Right lobe of liver (tissue), 6 donors: ENCODE measurements at regions of chr4 and their contacts with region 1.

Region 1: DNA sequence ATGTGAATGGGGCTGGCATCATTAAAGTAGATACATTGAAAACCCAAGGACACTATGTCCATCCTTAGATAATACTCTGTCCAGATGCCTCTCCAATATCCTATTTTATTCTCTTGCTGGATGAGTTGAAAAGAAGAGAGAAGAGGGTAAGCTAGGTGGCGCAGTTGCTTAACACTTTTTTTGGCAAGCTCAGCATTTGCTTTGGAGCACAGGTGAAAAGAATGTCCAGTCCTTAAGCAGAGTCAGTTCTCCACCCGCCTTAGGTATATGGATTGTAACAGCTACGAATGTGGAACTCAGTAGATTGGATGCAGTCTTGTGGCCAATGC is 208.4 kb downstream of the NWD2 start:
- DNase-seq: peak in 1 of 3 donors; percentile 75
- ATAC-seq: peak; percentile 71 to 81 (median 73)
- H3K4me3 ChIP-seq: peak overlapping the region; percentile 50 to 74 (median 56)
- H3K27ac ChIP-seq: peak overlapping the region in 2 of 3 donors; percentile 73 to 90
- H3K4me1 ChIP-seq: peaks cover 0 to 14% (median 3%) of the 10 kb centered on the region in 4 donors
- H3K27me3 ChIP-seq: no peaks in the 10 kb centered on the region
- CTCF ChIP-seq: peak; percentile 57 to 72 (median 63)
- POLR2A ChIP-seq: no peak

Region 2: DNA sequence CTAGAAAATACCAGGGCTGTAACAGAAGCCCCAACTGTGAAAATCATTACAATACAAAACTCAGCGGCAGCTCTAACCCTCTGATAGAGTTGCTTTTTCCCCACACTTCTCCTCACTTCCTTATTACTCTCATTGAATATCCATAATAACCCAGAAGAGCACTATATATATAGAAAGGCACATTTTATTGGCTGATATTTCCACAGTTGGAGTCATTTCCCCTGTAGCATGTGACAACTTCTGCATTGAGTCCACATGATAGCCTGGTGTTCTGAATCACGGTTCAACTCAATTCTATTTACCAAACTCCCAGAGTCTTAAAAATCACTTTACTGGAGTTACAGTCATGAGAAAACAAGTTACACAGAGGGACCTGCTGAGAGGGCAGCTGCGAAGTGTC is 255.0 kb before region 1 on chr4:
- intact Hi-C with region 1: no loop called
- DNase-seq: no peak
- ATAC-seq: no peak
- H3K4me3 ChIP-seq: no peak overlapping the region
- H3K27ac ChIP-seq: no peak overlapping the region
- H3K4me1 ChIP-seq: no peaks in the 10 kb centered on the region
- H3K27me3 ChIP-seq: no peaks in the 10 kb centered on the region
- CTCF ChIP-seq: no peak
- POLR2A ChIP-seq: no peak

Region 3: GRCh38 chr4:37568481-37568880 is 115.6 kb after region 1 on chr4:
- intact Hi-C with region 1: loop called in 1 of 2 experiments (anchors 5 kb)
- DNase-seq: no peak
- ATAC-seq: no peak
- H3K4me3 ChIP-seq: no peak overlapping the region
- H3K27ac ChIP-seq: no peak overlapping the region
- H3K4me1 ChIP-seq: no peaks in the 10 kb centered on the region
- H3K27me3 ChIP-seq: no peaks in the 10 kb centered on the region
- CTCF ChIP-seq: no peak
- POLR2A ChIP-seq: no peak